ENCODE measurements at regions of chr3 and their contacts with region 1.

Region 1: DNA sequence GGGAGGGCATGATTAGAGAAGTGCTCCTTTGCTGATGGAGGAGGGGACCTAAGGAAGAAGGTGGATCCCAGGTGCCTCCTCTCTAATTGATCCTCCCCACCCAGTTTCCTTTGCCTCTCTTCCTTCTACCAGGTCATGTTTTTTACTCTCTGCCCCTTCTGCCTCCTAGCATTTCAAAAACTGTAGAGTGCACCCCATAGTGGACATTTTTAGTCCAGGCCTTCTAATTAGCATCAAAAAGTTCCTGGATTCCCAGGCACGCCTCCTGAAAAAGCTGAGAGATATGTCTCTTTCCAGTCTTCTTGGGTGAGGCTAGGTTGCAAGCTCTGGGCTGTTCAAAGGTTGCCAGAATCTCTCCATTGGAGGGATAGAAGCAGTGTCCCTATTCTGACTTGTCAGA is 18.7 kb upstream of the ITGB5 start:
- DNase-seq: no peak
- ATAC-seq: no peak
- H3K4me3 ChIP-seq: no peak overlapping the region
- H3K27ac ChIP-seq: no peak overlapping the region
- H3K4me1 ChIP-seq: peaks cover 0 to 8% (median 4%) of the 10 kb centered on the region in 9 donors
- H3K27me3 ChIP-seq: no peaks in the 10 kb centered on the region
- CTCF ChIP-seq: no peak

Region 2: GRCh38 chr3:124761250-124761796 is 144.5 kb before region 1 on chr3:
- intact Hi-C with region 1: loop called (anchors 1 to 2 kb)
- DNase-seq: peak; percentile 88 to 89
- ATAC-seq: peak; percentile 87 to 94 (median 89)
- H3K4me3 ChIP-seq: no peak overlapping the region
- H3K27ac ChIP-seq: peak overlapping the region in 6 of 10 donors; percentile 4 to 64 (median 52)
- H3K4me1 ChIP-seq: peaks cover 0 to 22% (median 13%) of the 10 kb centered on the region in 9 donors
- H3K27me3 ChIP-seq: no peaks in the 10 kb centered on the region
- CTCF ChIP-seq: peak; percentile 96 to 99 (median 97)

Region 3: DNA sequence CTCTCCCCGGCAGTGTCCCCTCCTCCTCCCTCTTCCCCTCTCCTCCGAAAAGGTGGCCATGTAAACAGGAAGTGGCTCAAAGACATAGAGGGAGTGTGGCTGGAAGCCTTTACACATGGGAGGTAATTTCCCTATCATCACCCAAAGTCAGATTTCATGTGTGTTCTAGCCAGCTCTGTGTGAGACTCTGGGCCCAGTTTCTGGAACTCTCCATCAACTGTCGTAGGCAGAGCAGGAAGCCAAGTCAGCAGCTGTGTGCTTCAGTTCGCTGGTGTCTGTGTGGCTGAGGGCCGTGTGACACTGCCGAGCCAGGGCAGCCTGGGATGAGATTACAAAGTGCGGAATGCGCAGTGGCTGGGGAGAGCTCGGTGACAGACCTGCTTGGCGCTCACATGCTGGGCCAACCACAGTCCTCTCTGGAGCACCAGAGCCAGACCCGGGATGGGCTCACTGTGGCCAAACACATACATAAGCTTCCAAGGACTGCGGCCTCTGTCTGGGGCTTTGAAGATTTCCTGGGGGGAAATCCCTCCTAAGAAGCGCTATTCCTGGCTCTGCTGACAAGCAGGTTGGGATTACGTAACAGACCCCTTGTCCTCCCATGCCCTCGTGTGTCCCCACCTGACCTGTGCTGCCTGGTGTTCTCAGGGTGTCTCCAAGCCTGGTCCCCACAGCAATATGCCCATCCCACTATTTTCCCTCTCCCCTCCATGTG is 124.9 kb before region 1 on chr3:
- intact Hi-C with region 1: loop called in 2 of 10 experiments (anchors 2 to 5 kb)
- DNase-seq: peak; percentile 83 to 89
- ATAC-seq: peak; percentile 86 to 92 (median 90)
- H3K4me3 ChIP-seq: peak overlapping the region in 3 of 10 donors; percentile 0 to 16 (median 10)
- H3K27ac ChIP-seq: peak overlapping the region; percentile 67 to 97 (median 90)
- H3K4me1 ChIP-seq: peaks cover 38 to 90% (median 71%) of the 10 kb centered on the region in 9 donors
- H3K27me3 ChIP-seq: no peaks in the 10 kb centered on the region
- CTCF ChIP-seq: no peak

Region 4: GRCh38 chr3:124786441-124787241 is 119.2 kb before region 1 on chr3:
- intact Hi-C with region 1: loop called in 2 of 10 experiments (anchors 2 to 5 kb)
- DNase-seq: no peak
- ATAC-seq: peak; percentile 6 to 64 (median 47)
- H3K4me3 ChIP-seq: no peak overlapping the region
- H3K27ac ChIP-seq: peak overlapping the region; percentile 28 to 80 (median 70)
- H3K4me1 ChIP-seq: peaks cover 35 to 83% (median 69%) of the 10 kb centered on the region in 9 donors
- H3K27me3 ChIP-seq: no peaks in the 10 kb centered on the region
- CTCF ChIP-seq: peak in 8 of 9 donors; percentile 23 to 68 (median 51)

Measured in heart right ventricle (tissue), 16 donors.